Activated naive CD4-positive, alpha-beta T cell treated with anti-CD3 and anti-CD28 coated beads for 36 hours (primary cell): ENCODE measurements at regions of chr4 and their contacts with region 1.

Region 1: GRCh38 chr4:88033309-88033708 is 25.9 kb downstream of the PKD2 start:
- DNase-seq: peak; percentile 54
- H3K4me3 Mint-ChIP-seq: no peak overlapping the region
- H3K27ac Mint-ChIP-seq: no peak overlapping the region
- H3K4me1 Mint-ChIP-seq: no peaks in the 10 kb centered on the region
- H3K27me3 Mint-ChIP-seq: no peaks in the 10 kb centered on the region

Region 2: DNA sequence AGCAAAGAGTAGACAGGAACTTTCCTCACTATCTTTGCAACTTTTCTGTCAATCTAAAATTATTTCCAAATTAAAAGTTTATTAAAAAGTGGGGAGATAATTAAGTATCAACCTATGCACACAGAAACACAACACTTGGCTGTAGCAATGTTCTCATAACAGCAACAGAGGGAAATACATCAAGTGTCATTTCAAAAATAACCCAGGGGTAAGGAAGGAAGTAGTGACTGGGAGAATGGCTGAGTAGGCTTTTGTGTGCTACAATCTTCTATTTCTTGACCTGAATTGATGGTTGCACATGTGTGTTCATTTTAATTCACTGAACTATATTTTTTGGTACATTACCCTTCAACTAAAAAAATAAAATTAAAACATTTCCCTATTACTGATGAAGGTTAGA is 57.6 kb after region 1 on chr4:
- CTCF ChIA-PET with region 1: no interaction called
- intact Hi-C with region 1: no loop called
- DNase-seq: no peak
- H3K4me3 Mint-ChIP-seq: no peak overlapping the region
- H3K27ac Mint-ChIP-seq: no peak overlapping the region
- H3K4me1 Mint-ChIP-seq: no peaks in the 10 kb centered on the region
- H3K27me3 Mint-ChIP-seq: peaks cover 2% of the 10 kb centered on the region

Region 3: GRCh38 chr4:88225232-88226105 is 192.2 kb after region 1 on chr4:
- CTCF ChIA-PET with region 1: no interaction called
- intact Hi-C with region 1: no loop called
- DNase-seq: peak; percentile 37
- H3K4me3 Mint-ChIP-seq: no peak overlapping the region
- H3K27ac Mint-ChIP-seq: peak overlapping the region; percentile 37
- H3K4me1 Mint-ChIP-seq: peaks cover 16% of the 10 kb centered on the region
- H3K27me3 Mint-ChIP-seq: no peaks in the 10 kb centered on the region

Region 4: GRCh38 chr4:88369936-88370335 is 336.6 kb after region 1 on chr4:
- CTCF ChIA-PET with region 1: no interaction called
- intact Hi-C with region 1: loop called (anchors 5 kb)
- DNase-seq: no peak
- H3K4me3 Mint-ChIP-seq: no peak overlapping the region
- H3K27ac Mint-ChIP-seq: no peak overlapping the region
- H3K4me1 Mint-ChIP-seq: no peaks in the 10 kb centered on the region
- H3K27me3 Mint-ChIP-seq: no peaks in the 10 kb centered on the region

Region 5: GRCh38 chr4:89242864-89243732 is 1209.8 kb after region 1 on chr4:
- CTCF ChIA-PET with region 1: no interaction called
- intact Hi-C with region 1: no loop called
- DNase-seq: peak; percentile 12
- H3K4me3 Mint-ChIP-seq: no peak overlapping the region
- H3K27ac Mint-ChIP-seq: peak overlapping the region; percentile 24
- H3K4me1 Mint-ChIP-seq: peaks cover 24% of the 10 kb centered on the region
- H3K27me3 Mint-ChIP-seq: no peaks in the 10 kb centered on the region